Ovary (tissue), 10 donors: ENCODE measurements at regions of chr20 and their contacts with region 1.

Region 1: GRCh38 chr20:53828682-53829254 is 235.1 kb upstream of the ZNF217 start:
- DNase-seq: peak in 2 of 5 donors; percentile 26 to 51
- H3K4me3 ChIP-seq: peak overlapping the region; percentile 17
- H3K27ac ChIP-seq: peak overlapping the region; percentile 73 to 76
- H3K4me1 ChIP-seq: peaks cover 4% of the 10 kb centered on the region
- H3K27me3 ChIP-seq: no peaks in the 10 kb centered on the region
- CTCF ChIP-seq: no peak
- EP300 ChIP-seq: no peak
- POLR2A ChIP-seq: no peak

Region 2: DNA sequence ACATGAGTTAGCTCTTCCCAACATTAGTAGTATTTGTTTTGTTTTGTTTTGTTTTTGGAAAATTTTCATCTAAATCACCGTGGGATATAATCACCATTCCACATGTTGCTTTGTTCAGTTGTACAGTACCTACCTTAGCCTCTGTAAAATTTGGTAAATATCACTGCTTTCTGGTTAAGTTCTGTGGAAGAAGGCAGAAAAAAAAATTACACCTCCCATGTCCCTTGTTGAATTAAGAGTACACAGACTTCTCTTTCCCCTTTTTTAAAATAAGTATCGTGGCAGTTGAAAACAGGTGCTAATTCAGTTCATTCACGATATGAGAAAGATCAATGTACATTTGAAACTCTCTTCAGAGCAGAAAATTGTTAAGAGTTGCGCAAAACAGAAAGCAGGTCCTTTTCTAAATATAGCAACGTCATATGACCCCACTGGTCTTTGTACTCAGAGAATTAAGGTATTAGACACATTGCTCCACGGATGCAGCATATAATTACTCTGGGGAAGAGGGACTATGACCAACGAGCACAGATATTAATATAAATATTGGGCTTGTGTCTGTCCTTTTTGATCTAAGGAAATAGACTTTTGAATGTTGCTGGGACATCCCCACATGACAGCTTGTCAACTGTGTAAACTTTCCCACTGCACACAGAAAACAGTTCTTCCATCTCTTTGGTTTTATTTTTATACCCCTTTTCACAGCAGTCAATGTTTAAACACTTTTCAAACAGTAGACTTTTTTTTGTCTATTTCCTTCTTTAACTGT is 176.5 kb before region 1 on chr20:
- intact Hi-C with region 1: loop called in 1 of 4 experiments (anchors 10 kb)
- DNase-seq: no peak
- H3K4me3 ChIP-seq: no peak overlapping the region
- H3K27ac ChIP-seq: peak overlapping the region in 1 of 2 donors; percentile 45
- H3K4me1 ChIP-seq: peaks cover 2% of the 10 kb centered on the region
- H3K27me3 ChIP-seq: no peaks in the 10 kb centered on the region
- CTCF ChIP-seq: no peak
- EP300 ChIP-seq: no peak
- POLR2A ChIP-seq: no peak

Region 3: DNA sequence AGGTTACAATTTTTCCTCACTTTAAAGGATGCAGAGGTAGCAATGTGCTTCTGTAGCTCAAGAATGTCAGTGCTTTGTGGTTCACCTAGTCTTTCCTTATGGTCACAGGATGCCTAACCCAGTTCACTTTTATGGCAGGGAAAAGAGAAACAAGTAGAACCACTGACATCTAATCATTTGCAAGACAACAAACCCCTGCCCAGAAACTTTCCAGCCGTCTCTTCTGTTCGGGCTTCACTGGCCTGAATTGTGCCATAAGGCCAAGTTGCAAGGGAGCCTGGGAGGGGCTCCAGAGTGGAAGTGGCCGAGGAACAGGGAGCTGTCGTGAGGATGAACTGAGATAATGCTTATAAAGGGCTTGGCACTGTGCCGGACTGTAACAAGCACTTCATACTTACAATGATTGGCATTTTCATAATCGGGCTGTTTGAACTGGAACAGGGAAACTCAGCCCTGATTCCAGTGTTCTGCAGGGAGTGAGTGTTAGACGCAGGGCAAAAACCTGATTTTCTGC is 29.0 kb after region 1 on chr20:
- intact Hi-C with region 1: no loop called
- DNase-seq: no peak
- H3K4me3 ChIP-seq: no peak overlapping the region
- H3K27ac ChIP-seq: no peak overlapping the region
- H3K4me1 ChIP-seq: peaks cover 2% of the 10 kb centered on the region
- H3K27me3 ChIP-seq: no peaks in the 10 kb centered on the region
- CTCF ChIP-seq: no peak
- EP300 ChIP-seq: no peak
- POLR2A ChIP-seq: no peak

Region 4: DNA sequence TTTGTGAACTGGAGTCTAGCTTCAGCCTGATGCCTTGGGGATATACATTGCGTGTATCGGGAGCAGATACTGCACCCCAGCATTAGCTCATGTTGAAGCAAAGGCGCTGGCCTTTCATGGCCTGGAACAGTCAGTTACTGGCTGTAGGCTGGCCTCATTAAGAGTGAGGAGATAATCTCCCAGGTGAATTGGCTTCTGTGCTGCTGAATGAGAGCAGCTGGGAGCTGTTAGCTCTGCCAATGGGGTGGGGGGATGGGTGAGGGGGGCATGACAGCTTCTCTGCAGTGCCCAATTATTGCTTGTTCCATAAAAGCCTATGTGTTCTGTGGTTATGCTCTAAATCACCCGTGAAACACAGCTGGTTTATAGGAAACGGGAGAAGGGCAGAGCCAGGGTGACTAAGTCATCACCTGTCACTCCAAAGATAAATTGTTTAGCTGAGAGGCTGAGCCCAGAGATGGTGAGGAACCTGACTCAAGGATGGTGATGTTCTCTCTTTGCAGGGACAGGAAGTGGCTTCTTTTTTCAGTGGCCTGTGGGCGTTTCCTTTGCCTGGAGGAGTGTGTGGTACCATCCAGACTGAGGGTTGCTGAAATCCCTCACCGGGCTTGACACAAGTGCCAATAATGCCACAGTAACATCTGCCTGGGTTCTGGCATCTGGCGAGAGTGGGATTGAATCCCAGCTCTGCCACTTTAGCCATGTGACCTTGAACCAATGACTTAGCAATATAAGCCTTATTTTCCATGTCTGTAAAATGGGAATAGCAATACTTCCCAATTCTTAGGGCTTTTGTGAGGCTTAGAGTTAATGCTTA is 70.8 kb after region 1 on chr20:
- intact Hi-C with region 1: no loop called
- DNase-seq: no peak
- H3K4me3 ChIP-seq: no peak overlapping the region
- H3K27ac ChIP-seq: no peak overlapping the region
- H3K4me1 ChIP-seq: no peaks in the 10 kb centered on the region
- H3K27me3 ChIP-seq: no peaks in the 10 kb centered on the region
- CTCF ChIP-seq: no peak
- EP300 ChIP-seq: no peak
- POLR2A ChIP-seq: no peak